PC-9 (cell line): ENCODE measurements at regions of chr1 and their contacts with region 1.

Region 1: DNA sequence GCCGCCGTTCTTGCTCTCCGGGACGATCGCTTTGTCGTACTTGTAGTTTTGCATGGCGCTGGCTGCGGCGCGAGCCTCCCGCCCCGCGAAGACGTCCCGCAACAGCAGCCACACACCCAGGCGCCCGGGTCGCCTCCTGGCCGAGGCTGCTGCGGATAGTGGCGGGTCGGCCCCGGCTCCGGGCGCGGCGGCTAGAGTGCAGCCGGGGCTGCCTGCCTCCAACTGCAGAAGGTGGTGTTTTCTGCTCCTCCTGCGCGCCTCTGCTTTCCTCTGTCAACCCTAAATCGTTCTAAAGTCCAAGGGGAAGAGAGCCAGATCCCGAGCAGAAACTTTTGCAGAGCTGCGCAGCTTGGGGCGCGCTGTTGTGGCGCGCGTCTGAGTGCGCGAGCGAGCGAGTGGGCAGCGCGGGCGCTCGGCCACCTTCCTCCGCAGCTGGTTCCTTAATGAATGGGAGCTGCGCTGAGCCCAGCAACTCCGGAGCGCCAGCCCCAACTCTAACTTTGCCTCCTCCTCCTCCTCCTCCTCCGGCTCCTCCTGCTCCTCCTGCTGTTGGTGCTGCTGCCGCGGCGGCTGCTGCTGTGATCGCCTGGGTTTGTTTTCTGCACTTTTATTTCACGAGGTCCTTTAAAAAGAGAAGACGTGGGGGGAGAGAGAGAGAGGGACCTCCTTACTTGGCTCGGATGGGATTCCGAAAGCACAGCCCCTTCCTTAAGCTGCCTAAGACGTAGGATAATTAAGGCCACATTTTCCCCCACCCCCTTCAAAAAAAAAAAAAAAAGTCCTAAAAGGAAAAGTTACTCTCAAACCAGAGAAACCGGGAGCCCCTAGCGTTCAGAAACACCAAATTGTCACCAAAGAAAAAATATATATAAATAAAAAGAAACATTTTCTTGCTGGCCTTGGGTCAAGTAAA is at the start of gene PLPP3:
- DNase-seq: peak; percentile 81 to 86
- H3K4me3 ChIP-seq: peak within 1 kb of the TSS; percentile 87
- H3K27ac ChIP-seq: peak within 1 kb of the TSS; percentile 57
- H3K4me1 ChIP-seq: peaks cover 40% of the 10 kb centered on the region
- H3K27me3 ChIP-seq: no peaks in the 10 kb centered on the region
- CTCF ChIP-seq: peak; percentile 65
- total RNA-seq, gene PLPP3: 16.5 and 22.4 TPM in 2 replicates

Region 2: GRCh38 chr1:55375617-55376258 is 1203.5 kb before region 1 on chr1:
- CTCF ChIA-PET with region 1: no interaction called
- POLR2A ChIA-PET with region 1: no interaction called
- intact Hi-C with region 1: loop called (anchors 2 kb)
- DNase-seq: peak in 1 of 2 experiments; percentile 25
- H3K4me3 ChIP-seq: no peak overlapping the region
- H3K27ac ChIP-seq: no peak overlapping the region
- H3K4me1 ChIP-seq: no peaks in the 10 kb centered on the region; the same call in 1 of the 2 replicates
- H3K27me3 ChIP-seq: no peaks in the 10 kb centered on the region
- CTCF ChIP-seq: peak; percentile 88

Region 3: DNA sequence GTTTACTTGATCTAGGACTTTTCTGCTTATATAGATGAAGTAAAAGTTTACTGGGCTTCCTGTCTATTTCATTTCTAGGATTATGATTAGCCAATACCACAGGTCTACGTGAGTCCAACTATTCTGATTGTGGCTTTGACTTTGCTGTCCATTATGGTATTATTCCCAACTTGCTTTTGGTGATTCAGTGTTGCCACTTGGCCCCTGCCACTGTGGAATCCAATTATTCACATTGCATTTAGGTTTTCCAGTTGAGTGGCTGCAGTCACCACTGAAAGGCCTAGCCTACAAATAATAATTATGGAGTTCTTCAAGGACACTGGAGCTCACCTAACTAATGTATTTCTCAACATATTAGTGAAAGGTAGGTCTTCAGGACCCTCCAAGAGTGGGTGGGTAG is 789.8 kb before region 1 on chr1:
- CTCF ChIA-PET with region 1: no interaction called
- POLR2A ChIA-PET with region 1: no interaction called
- intact Hi-C with region 1: loop called (anchors 5 kb)
- DNase-seq: no peak
- H3K4me3 ChIP-seq: no peak overlapping the region
- H3K27ac ChIP-seq: no peak overlapping the region
- H3K4me1 ChIP-seq: peaks cover 20% of the 10 kb centered on the region
- H3K27me3 ChIP-seq: no peaks in the 10 kb centered on the region
- CTCF ChIP-seq: no peak

Region 4: GRCh38 chr1:56180520-56181190 is 398.6 kb before region 1 on chr1:
- CTCF ChIA-PET with region 1: no interaction called
- POLR2A ChIA-PET with region 1: no interaction called
- intact Hi-C with region 1: loop called (anchors 5 kb)
- DNase-seq: no peak
- H3K4me3 ChIP-seq: no peak overlapping the region
- H3K27ac ChIP-seq: no peak overlapping the region
- H3K4me1 ChIP-seq: no peaks in the 10 kb centered on the region
- H3K27me3 ChIP-seq: no peaks in the 10 kb centered on the region
- CTCF ChIP-seq: no peak

Region 5: GRCh38 chr1:56322211-56322610 is 257.0 kb before region 1 on chr1:
- CTCF ChIA-PET with region 1: no interaction called
- POLR2A ChIA-PET with region 1: interaction called, 12 read pairs
- intact Hi-C with region 1: no loop called
- DNase-seq: no peak
- H3K4me3 ChIP-seq: no peak overlapping the region
- H3K27ac ChIP-seq: no peak overlapping the region
- H3K4me1 ChIP-seq: peaks cover 9% of the 10 kb centered on the region
- H3K27me3 ChIP-seq: no peaks in the 10 kb centered on the region
- CTCF ChIP-seq: no peak

Region 6: DNA sequence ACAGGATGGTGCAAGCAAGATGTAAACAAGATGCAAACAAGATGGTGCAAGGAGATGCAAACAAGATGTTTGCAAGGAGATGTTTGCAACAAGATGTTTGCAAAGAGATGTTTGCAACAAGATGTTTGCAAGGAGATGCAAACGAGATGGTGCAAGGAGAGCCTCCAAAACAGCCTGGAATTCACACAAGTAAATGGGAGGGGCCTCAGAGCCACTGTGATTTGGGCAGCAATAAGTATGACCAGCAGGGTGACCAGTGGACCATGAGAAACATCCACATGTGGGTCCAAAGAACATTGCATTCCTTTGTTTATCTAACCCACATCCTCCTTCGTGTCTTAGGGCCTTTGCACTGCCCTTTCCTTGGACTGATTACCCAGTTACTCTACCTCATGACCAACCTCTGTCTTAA is 162.7 kb before region 1 on chr1:
- CTCF ChIA-PET with region 1: no interaction called
- POLR2A ChIA-PET with region 1: no interaction called
- intact Hi-C with region 1: loop called (anchors 5 kb)
- DNase-seq: no peak
- H3K4me3 ChIP-seq: no peak overlapping the region
- H3K27ac ChIP-seq: no peak overlapping the region
- H3K4me1 ChIP-seq: peaks cover 40% of the 10 kb centered on the region
- H3K27me3 ChIP-seq: no peaks in the 10 kb centered on the region
- CTCF ChIP-seq: no peak

Region 7: GRCh38 chr1:56803561-56804156 is 224.4 kb after region 1 on chr1:
- CTCF ChIA-PET with region 1: no interaction called
- POLR2A ChIA-PET with region 1: no interaction called
- intact Hi-C with region 1: loop called (anchors 5 kb)
- DNase-seq: peak; percentile 40 to 51
- H3K4me3 ChIP-seq: no peak overlapping the region
- H3K27ac ChIP-seq: no peak overlapping the region
- H3K4me1 ChIP-seq: no peaks in the 10 kb centered on the region
- H3K27me3 ChIP-seq: no peaks in the 10 kb centered on the region
- CTCF ChIP-seq: peak; percentile 72